ENCODE measurements at regions of chr14 and their contacts with region 1.

Region 1: GRCh38 chr14:105490572-105491366 is at the start of gene TEDC1:
- DNase-seq: peak; percentile 100
- H3K4me3 Mint-ChIP-seq: peak within 1 kb of the TSS; percentile 85
- H3K27ac Mint-ChIP-seq: peak within 1 kb of the TSS; percentile 90
- H3K4me1 Mint-ChIP-seq: peaks cover 12% of the 10 kb centered on the region
- H3K27me3 Mint-ChIP-seq: no peaks in the 10 kb centered on the region
- total RNA-seq, gene TEDC1: 38.2 and 42.6 TPM in 2 replicates

Region 2: DNA sequence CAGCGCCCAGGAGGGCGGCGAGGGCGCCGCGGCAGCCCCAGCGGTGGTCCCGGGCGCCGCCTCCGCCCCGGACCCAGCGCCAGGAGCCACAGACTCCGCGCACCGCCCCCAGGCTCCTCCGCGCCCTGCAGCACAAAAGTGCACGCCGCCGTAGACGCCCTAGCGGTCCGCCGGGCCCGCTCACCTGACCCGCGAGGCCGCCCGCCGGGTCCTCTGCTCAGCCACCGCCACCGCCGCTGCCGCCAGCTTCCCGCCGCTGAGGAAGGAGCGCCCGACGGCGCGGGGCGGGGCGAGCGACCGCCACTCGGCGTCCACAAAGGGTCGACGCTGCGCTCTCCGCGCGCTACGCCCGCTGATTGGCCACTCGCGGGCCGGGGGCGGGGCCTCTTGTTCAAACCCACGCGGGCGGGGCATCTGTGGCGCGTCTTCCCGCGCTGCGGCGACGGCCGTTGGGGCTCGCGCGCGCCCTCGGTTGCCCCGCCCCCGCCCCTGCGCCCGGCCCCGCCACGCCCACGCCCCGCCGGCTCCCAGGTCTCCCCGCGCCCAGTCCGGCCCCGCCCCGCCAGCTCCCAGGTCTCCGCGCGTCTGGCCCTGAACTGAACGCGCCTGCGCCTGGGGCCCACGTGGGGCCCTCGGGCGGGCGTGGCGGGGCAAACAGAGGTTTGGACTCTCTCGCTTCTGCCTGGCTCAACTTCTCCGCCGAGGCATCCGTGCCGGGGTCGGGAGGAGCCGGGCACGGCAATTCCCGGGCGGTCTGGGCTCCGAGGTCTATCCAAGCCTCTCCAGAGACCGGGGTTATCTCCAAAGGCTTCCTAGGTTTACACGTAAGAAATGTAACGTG is 469.7 kb before region 1 on chr14 and contains the start of gene CDCA4:
- intact Hi-C with region 1: loop called (anchors 5 kb)
- DNase-seq: peak; percentile 97
- H3K4me3 Mint-ChIP-seq: peak within 1 kb of the TSS; percentile 93
- H3K27ac Mint-ChIP-seq: peak within 1 kb of the TSS; percentile 81
- H3K4me1 Mint-ChIP-seq: peaks cover 60% of the 10 kb centered on the region
- H3K27me3 Mint-ChIP-seq: no peaks in the 10 kb centered on the region
- total RNA-seq, gene CDCA4: 47.7 and 49.6 TPM in 2 replicates

Region 3: GRCh38 chr14:105314287-105315200 is 176.2 kb before region 1 on chr14 and contains the start of gene PACS2:
- intact Hi-C with region 1: loop called (anchors 5 kb)
- DNase-seq: peak; percentile 73
- H3K4me3 Mint-ChIP-seq: peak within 1 kb of the TSS; percentile 88
- H3K27ac Mint-ChIP-seq: peak within 1 kb of the TSS; percentile 80
- H3K4me1 Mint-ChIP-seq: peaks cover 19% of the 10 kb centered on the region
- H3K27me3 Mint-ChIP-seq: no peaks in the 10 kb centered on the region
- total RNA-seq, gene PACS2: 35.2 and 36.8 TPM in 2 replicates

Region 4: GRCh38 chr14:105398044-105398725 is 92.6 kb before region 1 on chr14 and contains the start of gene TEX22:
- intact Hi-C with region 1: loop called (anchors 1 kb)
- DNase-seq: peak; percentile 84
- H3K4me3 Mint-ChIP-seq: peak within 1 kb of the TSS; percentile 92
- H3K27ac Mint-ChIP-seq: peak within 1 kb of the TSS; percentile 85
- H3K4me1 Mint-ChIP-seq: peaks cover 14% of the 10 kb centered on the region
- H3K27me3 Mint-ChIP-seq: no peaks in the 10 kb centered on the region
- total RNA-seq, gene TEX22: 4.7 and 5.0 TPM in 2 replicates

Region 5: GRCh38 chr14:105473677-105474482 is 16.9 kb before region 1 on chr14:
- intact Hi-C with region 1: loop called (anchors 2 kb)
- DNase-seq: peak; percentile 62
- H3K4me3 Mint-ChIP-seq: peak overlapping the region; percentile 47
- H3K27ac Mint-ChIP-seq: no peak overlapping the region
- H3K4me1 Mint-ChIP-seq: peaks cover 3% of the 10 kb centered on the region
- H3K27me3 Mint-ChIP-seq: peaks cover 21% of the 10 kb centered on the region